ENCODE measurements at regions of chr10 and their contacts with region 1.

Region 1: GRCh38 chr10:78657163-78657861 is 411.5 kb upstream of the ZMIZ1 start:
- DNase-seq: peak; percentile 17 to 94
- H3K4me3 ChIP-seq: no peak overlapping the region
- H3K27ac ChIP-seq: no peak overlapping the region
- H3K4me1 ChIP-seq: no peaks in the 10 kb centered on the region
- H3K27me3 ChIP-seq: no peaks in the 10 kb centered on the region
- CTCF ChIP-seq: peak; percentile 83 to 92 (median 86)
- EP300 ChIP-seq: no peak
- POLR2A ChIP-seq: no peak
- RAD21 ChIP-seq: peak; percentile 88 to 90

Region 2: DNA sequence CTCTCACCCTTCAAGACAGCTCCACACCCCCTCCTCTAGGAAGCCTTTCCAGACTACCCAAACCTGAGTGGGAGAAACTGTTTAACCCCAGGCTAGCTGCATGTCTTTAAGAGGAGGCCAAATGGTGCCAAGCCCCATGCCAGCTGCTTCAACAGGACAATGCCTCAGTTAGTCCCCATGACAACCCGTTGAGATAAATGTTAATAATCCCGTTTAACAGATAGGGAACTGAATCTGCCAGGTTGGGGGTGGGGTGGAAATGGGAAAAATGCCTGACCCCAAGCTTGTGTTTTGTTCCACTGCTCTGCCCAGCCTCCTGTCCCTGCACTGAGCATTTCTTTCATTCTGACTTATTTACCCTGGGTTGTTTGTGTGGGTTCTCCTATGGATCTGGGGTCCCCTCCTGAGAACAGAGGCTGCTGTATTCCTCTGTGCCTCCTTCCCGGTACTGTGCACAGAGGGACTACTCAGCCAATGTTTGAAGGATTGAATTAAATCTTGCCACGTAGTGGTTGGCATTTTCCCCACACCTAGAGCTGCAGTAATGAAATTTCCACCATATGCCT is 41.1 kb before region 1 on chr10:
- CTCF ChIA-PET with region 1: interaction called, 11 read pairs
- POLR2A ChIA-PET with region 1: no interaction called
- DNase-seq: no peak
- H3K4me3 ChIP-seq: no peak overlapping the region
- H3K27ac ChIP-seq: no peak overlapping the region
- H3K4me1 ChIP-seq: 0 out of 7 replicates have a peak, but pooled peaks cover 0 to 2% (median 0%) of the 10 kb centered on the region in 4 experiments
- H3K27me3 ChIP-seq: no peaks in the 10 kb centered on the region
- CTCF ChIP-seq: no peak
- EP300 ChIP-seq: no peak
- POLR2A ChIP-seq: no peak
- RAD21 ChIP-seq: no peak

Measured in H1 (cell line).